Activated CD8-positive, alpha-beta memory T cell treated with anti-CD3 and anti-CD28 coated beads, Interleukin-2, amount 10 ng/mL, durations not matched to agents 7 days and 5 days (primary cell): ENCODE measurements at regions of chr1 and their contacts with region 1.

Region 1: GRCh38 chr1:181430015-181430885 is 53.1 kb upstream of the CACNA1E start:
- DNase-seq: no peak
- ATAC-seq: no peak
- H3K4me3 Mint-ChIP-seq: no peak overlapping the region
- H3K27ac Mint-ChIP-seq: no peak overlapping the region
- H3K4me1 Mint-ChIP-seq: no peaks in the 10 kb centered on the region
- H3K27me3 Mint-ChIP-seq: peaks cover 23% of the 10 kb centered on the region

Region 2: GRCh38 chr1:181112071-181112929 is 317.9 kb before region 1 on chr1:
- CTCF ChIA-PET with region 1: no interaction called
- DNase-seq: no peak
- ATAC-seq: no peak
- H3K4me3 Mint-ChIP-seq: no peak overlapping the region
- H3K27ac Mint-ChIP-seq: no peak overlapping the region
- H3K4me1 Mint-ChIP-seq: peaks cover 9% of the 10 kb centered on the region
- H3K27me3 Mint-ChIP-seq: peaks cover 46% of the 10 kb centered on the region

Region 3: DNA sequence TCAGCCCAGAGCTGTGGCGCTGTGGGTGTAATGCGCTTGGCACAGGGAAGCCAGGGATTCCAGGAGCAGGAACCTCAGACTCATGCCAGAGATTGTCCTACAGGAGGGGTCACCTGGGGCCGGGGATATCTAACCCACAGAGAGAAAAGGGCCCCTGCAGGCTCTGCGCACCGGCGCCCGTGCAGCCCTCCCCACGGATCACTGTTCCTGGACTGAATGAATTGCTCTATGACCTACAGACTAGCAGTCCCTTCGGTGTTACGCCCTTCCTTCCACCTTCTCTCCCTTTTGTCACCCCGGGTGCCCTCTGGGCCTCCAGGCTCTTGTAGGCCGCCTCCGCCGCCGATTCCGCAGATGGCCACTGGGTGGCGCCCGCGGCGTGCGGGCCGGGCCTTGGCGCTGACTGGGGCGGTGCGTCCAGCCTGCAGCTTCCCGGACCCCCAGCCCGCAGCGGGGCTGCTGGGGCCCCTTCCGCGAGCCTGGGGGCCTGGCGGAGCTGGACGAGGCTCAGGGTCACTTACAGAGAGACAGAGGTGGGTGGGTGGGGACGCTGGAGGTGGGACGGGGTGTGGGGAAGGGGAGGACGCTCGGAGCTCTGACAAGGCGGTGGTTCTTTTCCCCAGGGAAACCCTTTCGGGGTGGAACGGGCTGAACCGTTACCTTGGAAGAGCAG is 240.4 kb before region 1 on chr1:
- CTCF ChIA-PET with region 1: interaction called, 102 read pairs
- DNase-seq: peak; percentile 76
- ATAC-seq: peak; percentile 91
- H3K4me3 Mint-ChIP-seq: no peak overlapping the region
- H3K27ac Mint-ChIP-seq: no peak overlapping the region
- H3K4me1 Mint-ChIP-seq: no peaks in the 10 kb centered on the region
- H3K27me3 Mint-ChIP-seq: peaks cover 9% of the 10 kb centered on the region